CD8-positive, alpha-beta T cell (primary cell): ENCODE measurements at regions of chr2 and their contacts with region 1.

Region 1: GRCh38 chr2:241355983-241356870 is at the start of gene FARP2:
- DNase-seq: peak; percentile 94 to 99 (median 97)
- ATAC-seq: peak; percentile 94
- H3K4me3 ChIP-seq: peak within 1 kb of the TSS; percentile 55 to 58
- H3K4me3 Mint-ChIP-seq: peak within 1 kb of the TSS; percentile 86
- H3K27ac ChIP-seq: peak within 1 kb of the TSS; percentile 23 to 52
- H3K27ac Mint-ChIP-seq: peak within 1 kb of the TSS; percentile 87
- H3K4me1 ChIP-seq: peaks cover 10% of the 10 kb centered on the region
- H3K4me1 Mint-ChIP-seq: peaks cover 21% of the 10 kb centered on the region
- H3K27me3 ChIP-seq: no peaks in the 10 kb centered on the region
- H3K27me3 Mint-ChIP-seq: no peaks in the 10 kb centered on the region
- CTCF ChIP-seq: no peak
- total RNA-seq, gene FARP2: 20.6 to 22.5 TPM

Region 2: DNA sequence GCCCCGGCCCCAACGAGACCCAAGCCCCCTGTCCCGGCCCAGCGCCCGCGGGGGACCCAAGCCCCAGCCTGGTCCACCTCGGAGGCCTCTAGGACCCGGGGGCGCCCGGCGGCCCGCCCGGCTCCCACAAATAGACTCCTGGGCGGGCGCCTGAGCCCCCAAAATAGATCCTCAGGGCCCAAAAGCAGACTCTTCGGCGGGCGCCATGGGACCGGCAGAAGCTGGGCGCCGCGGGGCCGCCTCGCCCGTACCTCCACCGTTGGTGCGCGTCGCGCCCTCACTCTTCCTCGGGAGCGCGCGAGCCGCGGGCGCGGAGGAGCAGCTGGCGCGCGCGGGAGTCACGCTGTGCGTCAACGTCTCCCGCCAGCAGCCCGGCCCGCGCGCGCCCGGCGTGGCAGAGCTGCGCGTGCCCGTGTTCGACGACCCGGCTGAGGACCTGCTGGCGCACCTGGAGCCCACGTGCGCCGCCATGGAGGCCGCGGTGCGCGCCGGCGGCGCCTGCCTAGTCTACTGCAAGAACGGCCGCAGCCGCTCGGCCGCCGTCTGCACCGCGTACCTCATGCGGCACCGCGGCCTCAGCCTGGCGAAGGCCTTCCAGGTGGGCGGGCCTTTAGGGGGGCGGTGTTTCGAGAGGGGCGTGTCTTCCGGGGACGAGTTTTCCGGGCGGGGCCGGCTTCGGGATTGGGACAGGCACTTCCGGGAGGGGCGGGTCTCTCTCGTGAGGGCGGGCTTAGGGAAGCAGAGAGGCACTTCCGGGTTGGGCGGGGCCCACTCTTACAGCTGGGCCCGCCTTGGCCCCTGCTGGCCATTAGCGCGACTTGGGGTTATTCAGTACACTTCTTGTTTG is 795.5 kb before region 1 on chr2:
- CTCF ChIA-PET with region 1: no interaction called
- POLR2A ChIA-PET with region 1: no interaction called
- intact Hi-C with region 1: loop called (anchors 10 kb)
- DNase-seq: peak; percentile 98 to 100 (median 100)
- ATAC-seq: peak; percentile 59
- H3K4me3 ChIP-seq: peak overlapping the region; percentile 74 to 76
- H3K4me3 Mint-ChIP-seq: peak overlapping the region; percentile 89
- H3K27ac ChIP-seq: peak overlapping the region; percentile 82 to 84
- H3K27ac Mint-ChIP-seq: peak overlapping the region; percentile 96
- H3K4me1 ChIP-seq: peaks cover 80% of the 10 kb centered on the region
- H3K4me1 Mint-ChIP-seq: peaks cover 71% of the 10 kb centered on the region
- H3K27me3 ChIP-seq: no peaks in the 10 kb centered on the region
- H3K27me3 Mint-ChIP-seq: no peaks in the 10 kb centered on the region
- CTCF ChIP-seq: no peak

Region 3: DNA sequence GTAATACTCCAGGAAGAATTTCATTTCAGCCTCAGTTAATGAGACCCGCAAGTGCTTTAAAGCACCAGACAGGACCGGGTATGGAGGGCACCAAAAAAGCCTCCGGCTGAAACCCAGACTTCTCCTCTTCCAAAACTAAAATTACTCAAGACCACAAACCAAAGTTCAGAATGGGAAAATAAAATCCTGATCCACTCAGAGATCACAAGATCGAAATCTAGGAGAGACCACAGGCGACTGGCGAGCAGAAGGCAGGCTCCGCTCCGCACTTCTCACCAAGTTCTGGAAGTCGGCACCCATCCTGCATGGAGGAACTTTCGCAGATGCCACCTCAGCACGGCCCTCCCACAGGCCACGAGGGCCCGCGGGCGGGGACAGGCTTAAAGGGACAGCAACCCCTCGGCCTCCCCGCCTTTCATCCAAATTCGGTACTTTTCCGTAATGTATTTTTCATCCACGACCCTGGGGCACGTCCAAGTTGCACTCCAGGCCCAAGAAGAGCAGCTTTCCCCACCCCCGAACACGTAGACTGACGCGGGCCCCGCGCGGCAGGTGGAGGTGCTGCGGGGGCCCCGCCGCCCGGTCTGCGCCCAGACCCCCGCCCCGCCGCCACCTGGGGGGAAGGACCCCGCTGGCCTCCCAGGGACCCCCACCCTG is 84.5 kb before region 1 on chr2:
- CTCF ChIA-PET with region 1: no interaction called
- POLR2A ChIA-PET with region 1: no interaction called
- intact Hi-C with region 1: loop called (anchors 2 to 10 kb)
- DNase-seq: peak; percentile 4 to 73 (median 64)
- ATAC-seq: peak; percentile 65
- H3K4me3 ChIP-seq: peak overlapping the region; percentile 44 to 66
- H3K4me3 Mint-ChIP-seq: peak overlapping the region; percentile 95
- H3K27ac ChIP-seq: peak overlapping the region; percentile 25 to 27
- H3K27ac Mint-ChIP-seq: peak overlapping the region; percentile 90
- H3K4me1 ChIP-seq: peaks cover 13% of the 10 kb centered on the region
- H3K4me1 Mint-ChIP-seq: peaks cover 52% of the 10 kb centered on the region
- H3K27me3 ChIP-seq: no peaks in the 10 kb centered on the region
- H3K27me3 Mint-ChIP-seq: no peaks in the 10 kb centered on the region
- CTCF ChIP-seq: no peak

Region 4: DNA sequence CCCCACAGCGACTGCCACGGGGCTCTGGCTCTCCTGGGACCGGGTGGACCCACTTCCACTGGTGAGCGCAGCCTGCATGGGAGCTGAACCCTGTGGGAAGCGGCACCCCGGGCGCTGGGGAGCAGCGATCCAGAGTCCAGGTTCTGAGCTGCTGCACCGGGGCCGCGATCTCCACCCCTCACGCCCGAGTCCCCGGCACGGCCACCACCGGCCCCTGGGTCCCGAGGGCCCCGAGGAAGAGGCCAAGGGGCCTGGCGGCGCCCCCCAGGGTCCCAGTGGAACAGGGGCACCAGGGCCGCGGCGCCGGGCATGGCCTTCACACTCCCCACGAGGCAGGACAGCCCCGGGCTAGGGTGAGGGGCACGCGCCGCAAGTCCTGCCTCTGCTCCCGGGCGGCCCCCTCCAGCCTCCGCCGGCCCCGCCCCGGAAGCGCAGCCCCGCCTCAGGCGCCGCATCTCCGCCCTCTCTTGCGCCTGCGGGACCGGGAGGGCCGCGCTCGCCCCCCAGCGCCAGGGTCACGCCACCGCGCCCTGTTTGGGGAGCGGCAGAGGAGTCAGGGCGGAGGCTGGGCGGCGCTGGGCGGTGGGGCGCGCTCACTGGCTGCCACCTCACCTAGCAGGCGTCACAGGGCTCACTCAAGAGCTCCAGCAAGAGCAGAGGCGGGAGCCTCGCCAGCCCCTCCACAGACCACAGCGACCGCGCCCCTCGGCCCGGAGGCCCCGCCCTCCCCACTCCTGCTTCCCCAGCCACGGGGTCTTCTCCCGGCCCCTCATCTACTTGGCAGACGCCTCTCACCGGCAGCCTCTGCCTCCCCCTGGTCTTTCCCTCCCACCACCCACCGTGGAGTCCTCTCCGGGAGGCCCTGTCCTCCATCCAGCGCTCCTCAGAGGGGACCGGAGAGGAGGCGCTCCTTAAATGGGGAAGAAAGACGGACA is 253.9 kb after region 1 on chr2:
- CTCF ChIA-PET with region 1: interaction called, 4 read pairs
- POLR2A ChIA-PET with region 1: no interaction called
- intact Hi-C with region 1: loop called (anchors 1 to 2 kb)
- DNase-seq: peak; percentile 81 to 96 (median 92)
- ATAC-seq: peak; percentile 99
- H3K4me3 ChIP-seq: peak overlapping the region; percentile 53 to 59
- H3K4me3 Mint-ChIP-seq: peak overlapping the region; percentile 63
- H3K27ac ChIP-seq: peak overlapping the region; percentile 51 to 77
- H3K27ac Mint-ChIP-seq: peak overlapping the region; percentile 72
- H3K4me1 ChIP-seq: peaks cover 23% of the 10 kb centered on the region
- H3K4me1 Mint-ChIP-seq: peaks cover 26% of the 10 kb centered on the region
- H3K27me3 ChIP-seq: no peaks in the 10 kb centered on the region
- H3K27me3 Mint-ChIP-seq: no peaks in the 10 kb centered on the region
- CTCF ChIP-seq: peak; percentile 63

Region 5: DNA sequence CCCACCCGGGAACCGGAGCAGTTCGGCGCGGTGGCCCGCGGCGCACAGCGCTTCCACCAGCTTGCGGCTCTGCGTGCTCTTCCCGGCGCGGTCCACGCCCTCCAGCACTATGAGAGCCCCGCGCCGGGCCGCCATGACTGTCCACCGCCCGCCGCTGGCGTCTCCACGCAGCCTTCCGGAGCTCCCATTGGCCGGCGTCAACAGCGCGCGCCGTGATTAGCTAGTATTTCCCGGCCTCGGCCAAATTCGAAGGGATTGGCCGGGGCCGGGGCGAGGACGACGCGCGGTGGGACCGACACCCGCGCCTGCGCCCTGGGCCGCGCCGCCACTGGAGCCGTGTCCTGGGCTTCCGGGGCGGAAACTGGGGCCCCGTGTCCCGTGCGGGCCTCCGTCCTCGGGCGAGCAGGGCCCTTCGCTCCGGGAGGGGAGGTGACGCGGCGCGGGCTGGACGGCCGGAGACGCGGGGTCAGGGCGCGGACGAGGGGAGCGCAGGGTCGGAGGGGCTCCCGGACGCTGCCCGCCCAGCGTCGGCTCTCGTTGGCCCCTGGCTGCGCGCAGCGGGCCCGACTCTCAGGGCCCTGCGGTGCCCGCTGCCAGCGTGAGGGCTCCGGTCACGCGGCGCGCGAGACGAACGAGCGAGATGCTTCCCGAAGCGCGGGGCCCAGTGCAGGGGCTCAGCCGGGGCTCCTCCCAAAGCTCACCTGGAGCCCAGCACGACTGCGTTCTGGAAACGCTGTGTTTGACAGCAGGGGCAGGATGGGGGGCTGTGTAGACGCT is 330.6 kb after region 1 on chr2 and contains the start of gene DTYMK:
- CTCF ChIA-PET with region 1: no interaction called
- POLR2A ChIA-PET with region 1: no interaction called
- intact Hi-C with region 1: loop called in 1 of 2 experiments (anchors 1 kb)
- DNase-seq: peak; percentile 89 to 98 (median 95)
- ATAC-seq: peak; percentile 95
- H3K4me3 ChIP-seq: peak within 1 kb of the TSS; percentile 87 to 98
- H3K4me3 Mint-ChIP-seq: peak within 1 kb of the TSS; percentile 90
- H3K27ac ChIP-seq: peak within 1 kb of the TSS; percentile 74 to 81
- H3K27ac Mint-ChIP-seq: peak within 1 kb of the TSS; percentile 91
- H3K4me1 ChIP-seq: peaks cover 21% of the 10 kb centered on the region
- H3K4me1 Mint-ChIP-seq: peaks cover 24% of the 10 kb centered on the region
- H3K27me3 ChIP-seq: no peaks in the 10 kb centered on the region
- H3K27me3 Mint-ChIP-seq: no peaks in the 10 kb centered on the region
- CTCF ChIP-seq: no peak
- total RNA-seq, gene DTYMK: 3.7 to 6.0 TPM